HCT116 (cell line): ENCODE measurements at regions of chr3 and their contacts with region 1.

Region 1: DNA sequence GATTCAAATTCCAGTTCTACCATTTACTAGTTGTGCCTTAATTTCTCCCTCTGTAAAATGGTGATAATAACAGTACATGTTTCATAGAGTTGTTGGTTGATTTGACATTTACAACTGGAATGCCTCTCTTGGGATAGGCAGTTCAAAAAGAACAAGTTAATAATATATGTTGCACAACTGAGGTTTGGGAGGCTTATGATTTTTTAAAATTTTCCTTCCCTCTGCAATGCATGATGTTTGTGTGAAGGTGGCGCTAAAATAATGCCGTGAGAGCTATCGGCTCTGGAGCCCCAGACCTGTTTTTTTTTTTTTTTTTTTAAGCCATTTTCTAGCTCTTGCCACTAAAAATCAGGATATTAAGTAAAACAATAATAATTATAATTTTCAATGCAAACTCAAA is 18.6 kb downstream of the DNAJB11 start:
- DNase-seq: no peak
- ATAC-seq: peak; percentile 68
- H3K4me3 ChIP-seq: 0 out of 4 replicates have a peak overlapping the region, but pooled peaks of 1 of the 2 experiments have one; percentile 1
- H3K27ac ChIP-seq: no peak overlapping the region
- H3K4me1 ChIP-seq: peaks cover 16 to 24% of the 10 kb centered on the region in 2 experiments
- H3K27me3 ChIP-seq: no peaks in the 10 kb centered on the region
- CTCF ChIP-seq: peak; percentile 44 to 59 (median 59); a peak in 5 of 6 replicates
- POLR2A ChIP-seq: no peak
- RAD21 ChIP-seq: peak; percentile 74

Region 2: DNA sequence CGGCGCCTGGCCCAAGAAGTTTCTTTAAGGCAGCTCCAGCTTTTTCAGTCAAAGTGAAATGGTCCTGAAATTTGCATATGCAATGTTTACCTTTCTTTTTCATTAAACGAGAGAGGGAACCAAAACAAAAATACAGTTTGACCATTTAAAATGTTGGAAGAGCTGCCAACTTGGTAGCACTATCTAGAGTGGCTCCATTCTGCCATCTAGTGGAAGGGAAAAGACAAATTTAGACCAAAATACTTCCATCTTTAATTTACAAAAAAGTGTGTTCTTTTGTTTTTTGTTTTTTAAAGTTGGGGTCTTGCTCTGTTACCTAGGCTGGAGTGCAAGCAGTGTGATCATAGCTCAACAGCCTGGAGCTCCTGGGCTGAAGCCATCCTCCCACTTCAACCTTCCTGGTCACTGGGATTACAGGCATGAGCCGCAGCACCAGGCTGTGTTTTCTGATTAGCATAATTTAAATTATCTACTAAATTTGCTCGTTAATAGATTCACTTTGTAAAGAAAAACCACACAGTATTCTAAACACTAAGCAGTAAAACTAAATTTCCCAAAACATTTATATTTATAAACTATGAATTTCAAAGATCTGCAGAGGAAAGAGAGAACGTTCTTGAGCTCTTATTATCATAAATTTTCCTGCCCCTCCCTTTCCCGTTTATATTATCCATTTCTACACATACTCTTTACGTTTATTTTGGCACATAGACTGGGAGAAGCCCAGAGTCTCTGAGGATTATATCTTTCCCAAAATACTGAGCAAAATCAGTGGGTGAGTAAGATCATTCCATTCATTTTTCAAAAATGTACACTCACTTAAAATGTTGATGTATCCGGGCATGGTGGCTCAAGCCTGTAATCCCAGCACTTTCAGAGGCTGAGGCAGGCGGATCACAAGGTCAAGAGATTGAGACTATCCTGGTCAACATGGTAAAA is 232.6 kb after region 1 on chr3:
- CTCF ChIA-PET with region 1: interaction called, 14 read pairs
- POLR2A ChIA-PET with region 1: no interaction called
- RAD21 ChIA-PET with region 1: interaction called in 1 of 2 experiments, 3 read pairs
- intact Hi-C with region 1: loop called (anchors 10 kb)
- DNase-seq: peak; percentile 36
- ATAC-seq: peak; percentile 41
- H3K4me3 ChIP-seq: no peak overlapping the region
- H3K27ac ChIP-seq: no peak overlapping the region
- H3K4me1 ChIP-seq: peaks cover 4 to 9% of the 10 kb centered on the region in 2 experiments; a peak in 2 of 4 replicates
- H3K27me3 ChIP-seq: no peaks in the 10 kb centered on the region
- CTCF ChIP-seq: peak; percentile 63 to 86 (median 76)
- POLR2A ChIP-seq: no peak
- RAD21 ChIP-seq: peak; percentile 89

Region 3: DNA sequence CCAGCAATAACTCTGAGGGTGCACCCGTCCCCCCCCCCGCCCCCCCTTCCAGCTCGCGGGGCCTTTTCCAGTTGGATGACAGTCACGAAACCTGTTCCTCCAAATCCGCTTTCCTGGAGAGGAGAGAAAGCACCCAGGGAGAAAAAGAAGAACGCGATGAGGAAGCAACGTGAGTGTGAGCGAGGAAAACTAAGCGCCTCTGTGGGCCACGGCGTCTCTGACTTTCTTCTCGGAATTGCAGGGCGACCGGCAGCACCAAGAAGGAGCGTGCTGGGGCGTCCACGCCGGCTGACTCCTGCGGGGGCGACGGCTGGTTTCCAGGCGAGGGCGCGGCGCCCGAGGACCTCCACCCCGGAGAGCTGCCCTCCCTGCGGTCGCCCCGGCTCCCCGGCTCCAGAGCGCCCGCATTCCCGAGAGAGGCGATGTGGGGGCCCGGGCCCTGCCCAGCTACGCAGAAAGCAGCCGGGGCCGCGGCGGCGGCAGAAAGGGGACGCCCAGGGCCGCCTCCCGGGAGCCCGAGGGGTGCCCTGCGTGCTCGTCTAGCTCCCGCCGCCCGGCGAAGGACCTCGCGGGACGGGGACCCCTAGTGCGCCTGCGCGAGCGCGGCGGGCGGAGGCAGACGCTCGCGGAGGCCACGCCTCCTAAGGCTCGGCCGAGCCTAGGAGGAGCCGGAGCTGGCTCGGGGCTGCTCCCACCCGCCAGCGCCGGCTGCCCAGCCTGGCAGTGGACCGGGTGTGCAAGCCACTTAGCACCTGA is 238.0 kb after region 1 on chr3:
- CTCF ChIA-PET with region 1: interaction called, 14 read pairs
- POLR2A ChIA-PET with region 1: no interaction called
- RAD21 ChIA-PET with region 1: no interaction called
- intact Hi-C with region 1: loop called (anchors 10 kb)
- DNase-seq: peak; percentile 49
- ATAC-seq: peak; percentile 91
- H3K4me3 ChIP-seq: peak overlapping the region; percentile 75 to 80
- H3K27ac ChIP-seq: peak overlapping the region; percentile 89
- H3K4me1 ChIP-seq: peaks cover 4 to 14% of the 10 kb centered on the region in 2 experiments; a peak in 2 of 4 replicates
- H3K27me3 ChIP-seq: peaks cover 26% of the 10 kb centered on the region
- CTCF ChIP-seq: no peak
- POLR2A ChIP-seq: peak; percentile 89
- RAD21 ChIP-seq: no peak